B cell (primary cell): ENCODE measurements at regions of chr1 and their contacts with region 1.

Region 1: DNA sequence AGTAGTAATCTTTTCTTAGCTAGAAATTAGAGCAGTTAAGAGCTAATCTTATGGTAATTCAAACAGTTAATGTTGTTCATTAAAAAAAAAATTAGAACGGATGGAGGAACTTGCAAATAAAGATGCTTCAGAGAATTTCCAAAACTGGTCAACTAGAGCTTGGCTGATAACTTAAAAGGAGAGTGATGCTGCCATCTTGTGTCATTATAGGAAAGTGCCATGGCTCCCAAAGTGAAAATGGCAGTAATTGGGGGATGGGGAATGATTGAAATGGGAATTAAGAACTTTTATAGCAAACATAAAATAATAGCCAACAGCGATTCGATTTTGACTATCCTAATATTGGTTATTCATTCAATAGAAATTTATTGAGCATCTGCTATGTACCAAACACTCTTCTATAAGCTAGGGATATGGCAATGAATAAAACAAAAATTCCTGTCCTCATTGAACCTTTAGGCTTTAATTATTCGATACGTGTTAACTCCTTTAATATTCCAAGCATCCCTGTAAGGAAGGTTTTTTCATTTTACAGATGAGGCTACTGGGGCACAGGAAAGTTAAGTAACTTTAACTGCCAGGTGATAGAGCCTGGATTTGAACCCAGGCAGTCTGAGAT is 5.7 kb upstream of the PLPP3 start:
- DNase-seq: peak; percentile 71
- ATAC-seq: peak; percentile 64
- H3K4me3 ChIP-seq: no peak overlapping the region
- H3K4me3 Mint-ChIP-seq: no peak overlapping the region
- H3K27ac ChIP-seq: no peak overlapping the region
- H3K27ac Mint-ChIP-seq: no peak overlapping the region
- H3K4me1 ChIP-seq: peaks cover 0 to 2% of the 10 kb centered on the region in 2 donors
- H3K4me1 Mint-ChIP-seq: peaks cover 7% of the 10 kb centered on the region
- H3K27me3 ChIP-seq: no peaks in the 10 kb centered on the region
- H3K27me3 Mint-ChIP-seq: peaks cover 3% of the 10 kb centered on the region
- CTCF ChIP-seq: peak; percentile 98

Region 2: DNA sequence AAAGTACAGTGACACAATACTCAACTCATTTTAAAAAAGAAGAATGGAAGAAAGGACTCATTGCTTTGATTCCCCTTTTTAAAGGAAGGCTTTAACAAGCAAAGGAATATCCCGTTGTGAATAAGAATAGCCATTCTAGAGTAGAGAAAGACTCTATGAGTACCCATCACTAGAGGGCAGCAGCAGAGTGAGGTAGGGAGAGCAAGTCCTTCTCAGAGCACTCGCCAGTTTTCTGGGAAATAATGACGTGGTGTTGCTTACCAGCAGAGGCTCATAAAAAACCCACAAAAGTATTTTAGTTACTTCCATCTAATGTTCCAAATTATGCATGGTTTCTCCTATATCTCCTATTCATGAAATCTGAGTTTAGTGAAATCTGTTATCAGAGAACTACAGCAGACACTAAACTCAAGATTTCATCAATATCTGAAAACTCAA is 1444.5 kb before region 1 on chr1:
- CTCF ChIA-PET with region 1: interaction called, 6 read pairs
- POLR2A ChIA-PET with region 1: no interaction called
- intact Hi-C with region 1: loop called (anchors 2 kb)
- DNase-seq: peak; percentile 76
- ATAC-seq: peak; percentile 88
- H3K4me3 ChIP-seq: no peak overlapping the region
- H3K4me3 Mint-ChIP-seq: no peak overlapping the region
- H3K27ac ChIP-seq: no peak overlapping the region
- H3K27ac Mint-ChIP-seq: no peak overlapping the region
- H3K4me1 ChIP-seq: no peaks in the 10 kb centered on the region
- H3K4me1 Mint-ChIP-seq: peaks cover 3% of the 10 kb centered on the region
- H3K27me3 ChIP-seq: no peaks in the 10 kb centered on the region
- H3K27me3 Mint-ChIP-seq: no peaks in the 10 kb centered on the region
- CTCF ChIP-seq: peak; percentile 87

Region 3: GRCh38 chr1:55284852-55285251 is 1300.2 kb before region 1 on chr1:
- CTCF ChIA-PET with region 1: interaction called, 115 read pairs
- POLR2A ChIA-PET with region 1: interaction called, 6 read pairs
- intact Hi-C with region 1: loop called (anchors 1 kb)
- DNase-seq: peak; percentile 46
- ATAC-seq: no peak
- H3K4me3 ChIP-seq: no peak overlapping the region
- H3K4me3 Mint-ChIP-seq: no peak overlapping the region
- H3K27ac ChIP-seq: no peak overlapping the region
- H3K27ac Mint-ChIP-seq: no peak overlapping the region
- H3K4me1 ChIP-seq: peaks cover 8 to 16% of the 10 kb centered on the region in 2 donors
- H3K4me1 Mint-ChIP-seq: peaks cover 37% of the 10 kb centered on the region
- H3K27me3 ChIP-seq: no peaks in the 10 kb centered on the region
- H3K27me3 Mint-ChIP-seq: peaks cover 7% of the 10 kb centered on the region
- CTCF ChIP-seq: peak; percentile 68

Region 4: GRCh38 chr1:55375617-55376258 is 1209.3 kb before region 1 on chr1:
- CTCF ChIA-PET with region 1: interaction called, 76 read pairs
- POLR2A ChIA-PET with region 1: no interaction called
- intact Hi-C with region 1: loop called (anchors 1 kb)
- DNase-seq: peak; percentile 52
- ATAC-seq: peak; percentile 45
- H3K4me3 ChIP-seq: no peak overlapping the region
- H3K4me3 Mint-ChIP-seq: no peak overlapping the region
- H3K27ac ChIP-seq: no peak overlapping the region
- H3K27ac Mint-ChIP-seq: no peak overlapping the region
- H3K4me1 ChIP-seq: no peaks in the 10 kb centered on the region
- H3K4me1 Mint-ChIP-seq: no peaks in the 10 kb centered on the region
- H3K27me3 ChIP-seq: no peaks in the 10 kb centered on the region
- H3K27me3 Mint-ChIP-seq: peaks cover 4% of the 10 kb centered on the region
- CTCF ChIP-seq: peak; percentile 89

Region 5: GRCh38 chr1:55702064-55702463 is 883.0 kb before region 1 on chr1:
- CTCF ChIA-PET with region 1: interaction called, 17 read pairs
- POLR2A ChIA-PET with region 1: no interaction called
- intact Hi-C with region 1: loop called (anchors 2 kb)
- DNase-seq: peak; percentile 5
- ATAC-seq: peak; percentile 43
- H3K4me3 ChIP-seq: no peak overlapping the region
- H3K4me3 Mint-ChIP-seq: no peak overlapping the region
- H3K27ac ChIP-seq: no peak overlapping the region
- H3K27ac Mint-ChIP-seq: no peak overlapping the region
- H3K4me1 ChIP-seq: no peaks in the 10 kb centered on the region
- H3K4me1 Mint-ChIP-seq: no peaks in the 10 kb centered on the region
- H3K27me3 ChIP-seq: peaks cover 0 to 3% (median 2%) of the 10 kb centered on the region in 4 experiments
- H3K27me3 Mint-ChIP-seq: peaks cover 12% of the 10 kb centered on the region
- CTCF ChIP-seq: peak; percentile 76

Region 6: DNA sequence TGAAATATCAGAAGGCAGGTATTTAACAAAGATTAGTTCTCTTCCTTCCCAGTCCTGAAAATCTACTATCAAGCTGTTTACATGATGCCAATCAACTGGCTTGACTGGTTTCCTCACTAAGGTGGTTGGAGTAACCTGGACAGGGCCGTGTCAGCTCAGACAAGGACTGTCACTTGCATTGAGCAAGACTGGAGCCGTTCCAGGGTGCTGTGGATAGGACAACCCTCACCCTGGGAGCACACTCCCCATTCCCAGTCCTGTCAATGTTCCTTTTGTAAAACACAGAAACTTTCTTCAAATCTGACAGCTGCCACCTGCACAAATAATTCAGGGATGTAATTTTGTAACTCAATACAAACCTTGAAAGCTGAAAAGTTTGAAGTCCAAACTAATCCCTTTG is 37.1 kb before region 1 on chr1:
- CTCF ChIA-PET with region 1: no interaction called
- POLR2A ChIA-PET with region 1: no interaction called
- intact Hi-C with region 1: no loop called
- DNase-seq: no peak
- ATAC-seq: no peak
- H3K4me3 ChIP-seq: no peak overlapping the region
- H3K4me3 Mint-ChIP-seq: no peak overlapping the region
- H3K27ac ChIP-seq: no peak overlapping the region
- H3K27ac Mint-ChIP-seq: no peak overlapping the region
- H3K4me1 ChIP-seq: no peaks in the 10 kb centered on the region
- H3K4me1 Mint-ChIP-seq: peaks cover 3% of the 10 kb centered on the region
- H3K27me3 ChIP-seq: no peaks in the 10 kb centered on the region
- H3K27me3 Mint-ChIP-seq: no peaks in the 10 kb centered on the region
- CTCF ChIP-seq: no peak

Region 7: GRCh38 chr1:56709269-56709880 is 124.4 kb after region 1 on chr1:
- CTCF ChIA-PET with region 1: interaction called, 18 read pairs
- POLR2A ChIA-PET with region 1: no interaction called
- intact Hi-C with region 1: loop called (anchors 1 kb)
- DNase-seq: peak; percentile 61
- ATAC-seq: no peak
- H3K4me3 ChIP-seq: no peak overlapping the region
- H3K4me3 Mint-ChIP-seq: no peak overlapping the region
- H3K27ac ChIP-seq: no peak overlapping the region
- H3K27ac Mint-ChIP-seq: no peak overlapping the region
- H3K4me1 ChIP-seq: no peaks in the 10 kb centered on the region
- H3K4me1 Mint-ChIP-seq: no peaks in the 10 kb centered on the region
- H3K27me3 ChIP-seq: peaks cover 0 to 3% (median 0%) of the 10 kb centered on the region in 4 experiments
- H3K27me3 Mint-ChIP-seq: peaks cover 25% of the 10 kb centered on the region
- CTCF ChIP-seq: peak; percentile 90